CD4-positive, alpha-beta T cell (primary cell): ENCODE measurements at regions of chr16 and their contacts with region 1.

Region 1: GRCh38 chr16:27401768-27402568 is at the start of gene IL21R:
- DNase-seq: peak; percentile 76 to 95 (median 86)
- ATAC-seq: peak; percentile 81
- H3K4me3 ChIP-seq: peak within 1 kb of the TSS; percentile 99
- H3K4me3 Mint-ChIP-seq: peak within 1 kb of the TSS; percentile 98
- H3K27ac ChIP-seq: peak within 1 kb of the TSS; percentile 81 to 94
- H3K27ac Mint-ChIP-seq: peak within 1 kb of the TSS; percentile 90
- H3K4me1 ChIP-seq: peaks cover 63% of the 10 kb centered on the region
- H3K4me1 Mint-ChIP-seq: peaks cover 79% of the 10 kb centered on the region
- H3K27me3 ChIP-seq: no peaks in the 10 kb centered on the region
- H3K27me3 Mint-ChIP-seq: no peaks in the 10 kb centered on the region
- CTCF ChIP-seq: no peak
- total RNA-seq, gene IL21R: 34.5 to 34.8 TPM

Region 2: DNA sequence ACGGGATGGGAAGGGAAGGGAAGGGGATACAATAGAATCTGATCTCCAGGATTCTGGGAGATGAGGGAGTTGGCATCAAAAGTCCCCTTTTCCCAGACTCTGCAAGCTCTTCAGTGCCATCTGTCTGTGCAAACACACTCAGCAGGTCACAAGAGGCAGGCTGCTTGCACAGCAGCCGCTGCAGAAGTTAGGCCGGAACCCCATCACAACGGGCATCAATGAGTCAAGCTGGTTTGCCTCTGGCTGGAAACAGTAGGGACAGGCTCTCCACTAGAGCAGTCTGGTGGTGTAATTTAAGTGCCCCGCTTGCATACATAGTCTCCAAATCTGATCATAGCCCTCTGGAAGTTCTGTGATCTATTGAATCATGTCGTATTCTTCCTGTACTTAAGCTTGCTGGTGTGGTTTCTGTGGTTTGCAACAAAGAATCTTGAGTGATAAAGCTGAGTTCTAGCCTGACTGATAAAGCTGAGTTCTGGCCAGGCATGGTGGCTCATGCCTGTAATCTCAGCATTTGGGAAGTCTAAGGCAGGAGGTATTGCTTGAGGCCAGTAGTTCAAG is 232.4 kb before region 1 on chr16:
- CTCF ChIA-PET with region 1: interaction called, 5 read pairs
- POLR2A ChIA-PET with region 1: interaction called, 17 read pairs
- intact Hi-C with region 1: no loop called
- DNase-seq: peak; percentile 55 to 94 (median 75)
- ATAC-seq: peak; percentile 84
- H3K4me3 ChIP-seq: peak overlapping the region; percentile 5
- H3K4me3 Mint-ChIP-seq: peak overlapping the region; percentile 2
- H3K27ac ChIP-seq: peak overlapping the region in 1 of 2 donors; percentile 21
- H3K27ac Mint-ChIP-seq: peak overlapping the region; percentile 71
- H3K4me1 ChIP-seq: peaks cover 66% of the 10 kb centered on the region
- H3K4me1 Mint-ChIP-seq: peaks cover 75% of the 10 kb centered on the region
- H3K27me3 ChIP-seq: no peaks in the 10 kb centered on the region
- H3K27me3 Mint-ChIP-seq: no peaks in the 10 kb centered on the region
- CTCF ChIP-seq: no peak

Region 3: DNA sequence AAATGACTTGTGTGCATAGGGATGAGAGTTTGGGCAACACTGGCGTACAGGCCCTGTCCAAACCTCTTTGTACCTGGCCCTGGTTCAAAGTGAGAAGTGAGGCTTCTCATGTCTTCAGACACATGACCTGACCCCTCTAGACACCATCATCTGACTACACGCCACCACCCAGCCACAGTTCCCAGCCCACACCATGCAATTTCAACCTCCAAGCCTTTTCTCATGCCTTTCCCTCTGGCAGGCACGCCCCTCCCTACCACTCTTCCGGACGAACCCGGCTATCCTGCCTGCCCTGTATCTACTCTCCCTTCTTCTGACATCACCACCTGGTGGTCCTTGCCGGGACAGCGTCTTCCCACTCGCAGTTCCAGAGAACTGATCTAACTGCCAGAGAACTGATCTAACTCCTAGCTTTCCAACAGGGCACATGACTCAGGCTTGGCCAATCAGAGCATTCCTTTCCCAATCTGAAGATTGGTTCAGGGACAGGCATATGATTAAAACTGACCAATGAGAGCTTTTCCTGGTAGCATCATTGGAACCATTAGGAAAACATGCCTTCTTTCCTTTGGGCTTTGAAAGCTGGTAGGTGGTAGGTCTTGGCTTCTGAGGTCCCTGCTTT is 27.1 kb before region 1 on chr16:
- CTCF ChIA-PET with region 1: interaction called, 3 read pairs
- POLR2A ChIA-PET with region 1: interaction called, 134 read pairs
- intact Hi-C with region 1: loop called (anchors 2 kb)
- DNase-seq: peak in 9 of 14 experiments; percentile 23 to 71 (median 42)
- ATAC-seq: peak; percentile 52
- H3K4me3 ChIP-seq: no peak overlapping the region
- H3K4me3 Mint-ChIP-seq: no peak overlapping the region
- H3K27ac ChIP-seq: no peak overlapping the region
- H3K27ac Mint-ChIP-seq: no peak overlapping the region
- H3K4me1 ChIP-seq: peaks cover 76% of the 10 kb centered on the region
- H3K4me1 Mint-ChIP-seq: peaks cover 39% of the 10 kb centered on the region
- H3K27me3 ChIP-seq: no peaks in the 10 kb centered on the region
- H3K27me3 Mint-ChIP-seq: no peaks in the 10 kb centered on the region
- CTCF ChIP-seq: peak; percentile 29

Region 4: DNA sequence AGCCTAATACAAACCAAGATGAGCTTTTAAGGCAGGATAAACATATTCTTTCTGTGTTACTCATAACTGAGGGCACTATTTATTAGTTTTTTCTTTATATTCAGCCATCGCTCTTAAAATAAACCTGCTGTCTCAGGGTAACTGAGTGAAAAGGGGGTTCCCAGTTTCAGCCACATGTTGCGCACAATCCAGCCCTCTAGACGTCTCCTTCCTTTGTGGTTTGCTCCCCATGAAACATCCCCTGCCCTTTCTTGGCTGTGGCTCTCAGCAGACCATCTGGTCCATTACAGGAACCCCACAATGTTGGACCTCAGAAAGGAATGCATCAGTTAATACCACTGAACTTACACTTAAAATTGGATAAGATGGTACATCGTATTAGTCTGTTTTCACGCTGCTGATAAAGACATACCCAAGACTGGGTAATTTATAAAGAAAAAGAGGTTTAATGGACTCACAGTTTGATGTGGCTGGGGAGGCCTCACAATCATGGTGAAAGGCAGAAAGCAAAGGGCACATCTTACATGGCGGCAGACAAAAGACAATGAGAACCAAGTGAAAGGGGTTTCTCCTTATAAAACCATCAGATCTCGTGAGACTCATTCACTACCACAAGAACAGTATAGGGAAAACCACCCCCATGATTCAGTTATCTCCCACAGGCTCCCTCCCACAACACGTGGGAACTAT is 12.6 kb before region 1 on chr16:
- CTCF ChIA-PET with region 1: no interaction called
- POLR2A ChIA-PET with region 1: interaction called, 14 read pairs
- intact Hi-C with region 1: no loop called
- DNase-seq: no peak
- ATAC-seq: no peak
- H3K4me3 ChIP-seq: no peak overlapping the region
- H3K4me3 Mint-ChIP-seq: no peak overlapping the region
- H3K27ac ChIP-seq: no peak overlapping the region
- H3K27ac Mint-ChIP-seq: no peak overlapping the region
- H3K4me1 ChIP-seq: no peaks in the 10 kb centered on the region
- H3K4me1 Mint-ChIP-seq: no peaks in the 10 kb centered on the region
- H3K27me3 ChIP-seq: no peaks in the 10 kb centered on the region
- H3K27me3 Mint-ChIP-seq: no peaks in the 10 kb centered on the region
- CTCF ChIP-seq: no peak

Region 5: GRCh38 chr16:27436921-27437650 is 35.1 kb after region 1 on chr16:
- CTCF ChIA-PET with region 1: no interaction called
- POLR2A ChIA-PET with region 1: no interaction called
- intact Hi-C with region 1: no loop called
- DNase-seq: peak in 1 of 14 experiments; percentile 15
- ATAC-seq: no peak
- H3K4me3 ChIP-seq: no peak overlapping the region
- H3K4me3 Mint-ChIP-seq: no peak overlapping the region
- H3K27ac ChIP-seq: no peak overlapping the region
- H3K27ac Mint-ChIP-seq: peak overlapping the region; percentile 76
- H3K4me1 ChIP-seq: peaks cover 2% of the 10 kb centered on the region
- H3K4me1 Mint-ChIP-seq: peaks cover 29% of the 10 kb centered on the region
- H3K27me3 ChIP-seq: no peaks in the 10 kb centered on the region
- H3K27me3 Mint-ChIP-seq: no peaks in the 10 kb centered on the region
- CTCF ChIP-seq: no peak

Region 6: DNA sequence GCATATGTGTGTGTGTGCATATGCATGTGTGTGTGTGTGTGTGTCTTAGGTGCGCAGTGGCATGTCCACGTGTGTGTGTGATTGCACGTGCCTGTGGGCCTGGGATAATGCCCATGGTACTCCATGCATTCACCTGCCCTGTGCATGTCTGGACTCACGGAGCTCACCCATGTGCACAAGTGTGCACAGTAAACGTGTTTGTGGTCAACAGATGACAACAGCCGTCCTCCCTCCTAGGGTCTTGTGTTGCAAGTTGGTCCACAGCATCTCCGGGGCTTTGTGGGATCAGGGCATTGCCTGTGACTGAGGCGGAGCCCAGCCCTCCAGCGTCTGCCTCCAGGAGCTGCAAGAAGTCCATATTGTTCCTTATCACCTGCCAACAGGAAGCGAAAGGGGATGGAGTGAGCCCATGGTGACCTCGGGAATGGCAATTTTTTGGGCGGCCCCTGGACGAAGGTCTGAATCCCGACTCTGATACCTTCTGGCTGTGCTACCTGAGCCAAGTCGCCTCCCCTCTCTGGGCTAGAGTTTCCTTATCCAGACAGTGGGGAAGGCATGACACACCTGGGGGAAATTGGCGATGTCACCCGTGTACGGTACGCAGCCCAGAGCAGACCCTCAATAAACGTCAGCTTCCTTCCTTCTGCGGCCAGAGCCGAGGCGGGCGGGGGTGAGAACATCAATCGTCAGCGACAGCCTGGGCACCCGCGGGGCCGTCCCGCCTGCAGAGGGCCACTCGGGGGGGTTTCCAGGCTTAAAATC is 47.6 kb after region 1 on chr16:
- CTCF ChIA-PET with region 1: interaction called, 4 read pairs
- POLR2A ChIA-PET with region 1: interaction called, 15 read pairs
- intact Hi-C with region 1: loop called (anchors 2 kb)
- DNase-seq: peak; percentile 31 to 93 (median 60)
- ATAC-seq: peak; percentile 46
- H3K4me3 ChIP-seq: peak overlapping the region; percentile 10
- H3K4me3 Mint-ChIP-seq: peak overlapping the region; percentile 70
- H3K27ac ChIP-seq: peak overlapping the region in 1 of 2 donors; percentile 18
- H3K27ac Mint-ChIP-seq: peak overlapping the region; percentile 93
- H3K4me1 ChIP-seq: peaks cover 78% of the 10 kb centered on the region
- H3K4me1 Mint-ChIP-seq: peaks cover 81% of the 10 kb centered on the region
- H3K27me3 ChIP-seq: no peaks in the 10 kb centered on the region
- H3K27me3 Mint-ChIP-seq: no peaks in the 10 kb centered on the region
- CTCF ChIP-seq: no peak